Activated T-helper 2 cell treated with anti-CD3 and anti-CD28 coated beads, Interferon-gamma antibody, Interleukin-2, Interleukin-4, amounts not matched to agents 10 μg/mL and 5 μg/mL and 100 μg/mL, durations not matched to agents 14 hours and 24 hours and 36 hours (primary cell): ENCODE measurements at regions of chr6 and their contacts with region 1.

Region 1: DNA sequence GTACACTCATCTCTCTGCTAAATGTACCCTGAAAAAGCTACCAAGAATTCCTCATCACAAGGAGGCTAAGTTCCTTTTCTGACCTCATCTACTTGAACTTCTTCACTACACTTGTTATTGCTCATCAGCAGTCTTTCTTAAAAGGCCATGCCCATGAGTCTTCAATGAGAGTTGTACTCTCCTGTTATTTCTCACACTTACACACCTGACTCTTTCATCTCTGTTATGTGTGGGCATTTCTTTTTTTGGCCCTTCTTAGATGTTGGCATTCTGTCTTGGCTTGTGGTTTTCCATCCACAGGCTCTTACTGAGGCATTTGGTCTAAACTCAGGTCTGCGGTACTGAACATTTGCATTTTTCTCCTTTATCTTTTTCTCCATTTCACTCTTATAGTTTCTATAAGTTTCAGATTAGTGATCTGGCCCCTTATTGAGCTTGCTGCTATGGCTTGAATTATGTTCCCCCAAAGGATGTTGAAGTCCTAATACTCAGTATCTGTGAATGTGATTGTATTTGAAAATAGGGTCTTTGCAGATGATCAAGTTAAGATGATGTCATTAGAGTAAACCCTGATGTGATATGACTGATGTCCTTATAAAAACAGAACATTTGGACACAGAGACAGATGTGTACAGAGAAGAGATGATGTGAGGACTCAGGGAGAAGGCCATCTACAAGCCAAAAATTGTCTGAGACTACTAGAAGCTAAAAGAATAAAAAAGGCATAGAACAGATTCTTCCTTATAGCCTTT is 10.8 kb upstream of the SLC17A1 start:
- DNase-seq: no peak
- H3K4me3 Mint-ChIP-seq: no peak overlapping the region
- H3K27ac Mint-ChIP-seq: no peak overlapping the region
- H3K4me1 Mint-ChIP-seq: no peaks in the 10 kb centered on the region
- H3K27me3 Mint-ChIP-seq: no peaks in the 10 kb centered on the region

Region 2: GRCh38 chr6:25866011-25866410 is 23.3 kb after region 1 on chr6:
- intact Hi-C with region 1: loop called (anchors 1 kb)
- DNase-seq: peak; percentile 19
- H3K4me3 Mint-ChIP-seq: no peak overlapping the region
- H3K27ac Mint-ChIP-seq: no peak overlapping the region
- H3K4me1 Mint-ChIP-seq: peaks cover 42% of the 10 kb centered on the region
- H3K27me3 Mint-ChIP-seq: no peaks in the 10 kb centered on the region

Region 3: GRCh38 chr6:25913741-25914140 is 71.0 kb after region 1 on chr6:
- intact Hi-C with region 1: no loop called
- DNase-seq: no peak
- H3K4me3 Mint-ChIP-seq: no peak overlapping the region
- H3K27ac Mint-ChIP-seq: peak overlapping the region; percentile 77
- H3K4me1 Mint-ChIP-seq: peaks cover 40% of the 10 kb centered on the region
- H3K27me3 Mint-ChIP-seq: no peaks in the 10 kb centered on the region